ENCODE measurements at regions of chr13 and their contacts with region 1.

Region 1: DNA sequence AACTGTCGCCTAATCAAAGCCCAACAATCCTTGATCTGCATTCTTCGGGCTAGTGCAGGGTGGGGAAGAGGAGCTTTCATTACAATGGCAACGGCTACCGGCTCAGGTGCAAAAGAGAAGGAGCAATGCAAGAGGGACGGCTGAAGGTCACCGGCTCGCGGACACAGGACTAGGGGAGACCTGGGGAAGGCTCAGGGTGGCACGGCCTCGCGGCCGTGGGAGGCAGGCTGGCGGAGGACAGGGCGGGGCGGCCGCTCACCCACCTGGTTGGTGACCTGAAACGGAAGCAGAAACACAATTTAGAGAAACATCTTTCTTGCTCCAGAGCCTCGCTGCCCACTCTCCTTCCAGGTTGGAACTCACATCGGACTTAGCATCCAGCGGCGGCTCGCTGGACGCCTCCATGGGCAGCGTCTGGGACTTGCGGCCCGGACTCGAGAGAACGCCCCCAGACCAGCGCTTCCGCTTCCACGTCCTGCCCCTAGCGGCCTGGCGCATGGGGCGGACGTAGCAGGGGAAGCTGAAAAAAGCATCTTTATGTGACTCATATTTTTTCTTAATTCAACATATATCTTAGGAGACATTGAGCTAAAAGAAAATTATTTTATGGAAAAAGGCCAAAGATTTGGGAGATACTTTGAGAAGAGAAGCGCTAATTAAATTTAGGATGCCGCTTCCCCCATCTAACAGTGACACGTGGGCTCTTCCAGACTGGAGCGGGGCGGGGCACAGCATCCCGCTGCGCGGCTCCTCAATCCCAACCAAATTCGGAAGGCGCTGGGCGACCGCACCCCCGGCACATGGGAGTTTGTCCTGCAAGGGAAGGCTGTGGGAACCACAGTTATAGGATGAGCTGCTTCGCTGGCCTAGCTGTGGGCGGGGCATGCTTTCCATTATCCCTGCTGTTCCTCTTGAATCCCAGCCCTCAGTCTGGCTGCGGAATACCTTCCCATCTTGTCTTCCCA is at the start of gene COMMD6:
- DNase-seq: peak; percentile 85
- H3K4me3 ChIP-seq: peak within 1 kb of the TSS; percentile 91
- H3K27ac ChIP-seq: peak within 1 kb of the TSS; percentile 1
- H3K4me1 ChIP-seq: peaks cover 16% of the 10 kb centered on the region
- CTCF ChIP-seq: 0 out of 2 replicates have a peak, but pooled peaks have one; percentile 24
- total RNA-seq, gene COMMD6: 30.6 and 87.6 TPM in 2 replicates

Region 2: DNA sequence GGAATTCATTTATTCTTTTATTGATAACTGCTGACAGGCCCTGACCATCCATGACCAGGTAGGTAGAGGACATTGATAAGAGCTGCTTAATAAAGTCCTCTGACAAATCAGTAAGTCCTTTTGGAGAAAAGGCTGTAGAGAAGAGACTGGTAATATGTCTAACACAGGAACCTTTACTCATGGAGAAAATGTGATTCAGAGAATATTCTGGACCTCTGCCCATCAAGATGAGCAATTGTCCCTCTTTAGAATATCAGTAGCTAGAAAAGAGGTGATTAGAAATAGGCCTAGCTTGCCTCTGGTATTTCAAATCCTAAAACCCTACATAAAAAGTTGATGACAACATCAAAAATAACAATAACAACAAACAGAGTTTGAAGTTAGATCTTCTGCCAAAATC is 698.0 kb before region 1 on chr13:
- CTCF ChIA-PET with region 1: no interaction called
- POLR2A ChIA-PET with region 1: no interaction called
- intact Hi-C with region 1: no loop called
- DNase-seq: no peak
- H3K4me3 ChIP-seq: no peak overlapping the region
- H3K27ac ChIP-seq: no peak overlapping the region
- H3K4me1 ChIP-seq: no peaks in the 10 kb centered on the region
- CTCF ChIP-seq: no peak

Region 3: GRCh38 chr13:75518439-75519088 is 19.1 kb before region 1 on chr13:
- CTCF ChIA-PET with region 1: no interaction called
- POLR2A ChIA-PET with region 1: interaction called, 11 read pairs
- intact Hi-C with region 1: no loop called
- DNase-seq: no peak
- H3K4me3 ChIP-seq: no peak overlapping the region
- H3K27ac ChIP-seq: no peak overlapping the region
- H3K4me1 ChIP-seq: no peaks in the 10 kb centered on the region
- CTCF ChIP-seq: no peak